Motor neuron (in vitro differentiated cells): ENCODE measurements at regions of chr16 and their contacts with region 1.

Region 1: DNA sequence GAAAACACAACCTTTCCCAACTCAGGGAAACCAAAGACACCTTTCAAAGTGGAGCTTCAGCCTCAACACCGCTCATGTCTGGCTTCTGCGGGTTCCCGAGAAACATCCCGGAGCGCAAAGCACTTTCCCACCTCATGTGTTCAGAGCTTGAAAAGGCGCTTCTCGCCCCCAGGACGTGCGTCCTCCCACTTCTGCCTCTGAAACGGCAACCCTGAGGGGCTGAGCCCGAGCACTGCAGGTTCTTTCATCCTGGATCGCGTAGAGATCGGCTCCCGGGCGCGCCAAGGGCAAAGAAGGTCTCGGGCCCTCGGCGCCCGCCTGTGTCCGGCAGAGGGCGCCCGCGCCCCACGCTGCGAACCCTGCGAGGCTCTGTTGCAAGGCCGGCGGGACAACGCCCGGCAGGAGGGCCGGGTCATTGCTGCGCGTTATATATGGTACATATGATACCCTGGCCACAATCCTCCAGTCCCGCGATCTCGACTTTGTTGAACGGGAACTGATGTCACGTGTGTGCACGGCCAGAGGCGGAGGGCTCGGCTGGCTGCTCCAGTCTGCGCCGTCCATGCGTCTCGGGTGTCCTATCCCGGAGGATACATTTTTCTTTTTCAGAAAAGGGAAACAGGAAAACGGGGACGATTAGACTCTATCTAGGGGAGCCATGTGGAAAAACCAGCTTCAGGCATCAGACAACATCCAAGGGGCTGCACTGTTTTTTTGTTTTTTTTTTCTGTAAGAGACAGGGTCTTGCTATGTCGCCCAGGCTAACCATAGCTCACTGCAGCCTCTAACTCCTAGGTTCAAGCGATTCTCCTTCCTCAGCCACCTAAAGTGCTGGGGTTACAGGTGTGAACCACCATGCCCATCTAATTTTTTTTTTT is 19.1 kb downstream of the COQ7 start:
- ATAC-seq: peak; percentile 98 to 100 (median 100)
- H3K4me3 ChIP-seq: peak overlapping the region; percentile 2 to 34 (median 18)
- H3K27ac ChIP-seq: no peak overlapping the region
- H3K4me1 ChIP-seq: no peaks in the 10 kb centered on the region

Region 2: GRCh38 chr16:19330841-19331397 is 244.4 kb after region 1 on chr16:
- in situ Hi-C with region 1: no loop called
- ATAC-seq: peak in 5 of 8 experiments; percentile 41 to 98 (median 94)
- H3K4me3 ChIP-seq: no peak overlapping the region
- H3K27ac ChIP-seq: no peak overlapping the region
- H3K4me1 ChIP-seq: no peaks in the 10 kb centered on the region

Region 3: DNA sequence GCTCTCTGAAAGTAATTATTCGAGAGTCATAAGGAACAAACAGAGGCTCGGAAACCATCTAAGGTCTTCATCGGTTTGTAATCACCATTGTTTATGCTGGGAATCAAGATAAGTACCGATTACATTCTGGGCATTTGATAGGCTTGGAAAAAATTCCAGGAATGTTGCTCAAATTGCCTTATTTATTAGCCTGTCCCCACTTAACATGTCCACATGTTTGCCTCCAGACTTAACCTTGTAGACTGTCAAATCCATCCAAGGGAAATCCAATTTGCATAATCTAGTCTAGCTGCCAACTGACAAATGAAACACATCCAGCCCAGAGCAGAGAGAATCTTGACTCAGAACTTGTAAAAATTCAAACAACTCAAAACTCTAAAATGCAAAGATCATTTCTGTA is 279.8 kb after region 1 on chr16:
- in situ Hi-C with region 1: loop called in 4 of 9 experiments (anchors 10 to 25 kb)
- ATAC-seq: peak in 3 of 8 experiments; percentile 43 to 69 (median 52)
- H3K4me3 ChIP-seq: no peak overlapping the region
- H3K27ac ChIP-seq: no peak overlapping the region
- H3K4me1 ChIP-seq: no peaks in the 10 kb centered on the region

Region 4: GRCh38 chr16:19375561-19376158 is 289.1 kb after region 1 on chr16:
- in situ Hi-C with region 1: loop called in 8 of 9 experiments (anchors 5 to 25 kb)
- ATAC-seq: peak; percentile 52 to 81 (median 66)
- H3K4me3 ChIP-seq: no peak overlapping the region
- H3K27ac ChIP-seq: no peak overlapping the region
- H3K4me1 ChIP-seq: no peaks in the 10 kb centered on the region

Region 5: GRCh38 chr16:19389246-19389645 is 302.7 kb after region 1 on chr16:
- in situ Hi-C with region 1: loop called in 3 of 9 experiments (anchors 10 to 25 kb)
- ATAC-seq: peak in 6 of 8 experiments; percentile 27 to 99 (median 76)
- H3K4me3 ChIP-seq: no peak overlapping the region
- H3K27ac ChIP-seq: no peak overlapping the region
- H3K4me1 ChIP-seq: peaks cover 0 to 8% of the 10 kb centered on the region in 2 donors

Region 6: DNA sequence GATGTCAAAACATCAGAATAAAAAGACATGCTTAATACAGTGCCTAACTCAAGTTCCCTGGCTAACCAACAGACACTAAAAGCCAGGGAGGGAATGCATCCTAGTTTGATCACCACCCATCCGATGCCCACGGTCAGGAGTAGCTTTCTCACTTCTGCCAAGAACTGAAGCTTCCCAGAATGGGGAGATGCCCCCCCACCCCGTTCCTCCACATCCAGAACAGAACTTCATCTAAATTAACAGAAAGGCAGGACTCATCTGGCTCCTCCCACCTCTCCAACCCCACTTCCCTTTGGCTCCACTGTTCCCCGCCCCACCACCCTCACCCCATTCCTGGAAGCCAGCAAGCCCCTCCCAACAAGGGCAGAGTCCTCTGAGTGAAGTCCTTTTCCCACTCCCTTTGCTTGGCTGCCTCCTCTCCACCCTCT is 401.7 kb after region 1 on chr16:
- in situ Hi-C with region 1: loop called in 1 of 9 experiments (anchors 25 kb)
- ATAC-seq: peak in 3 of 8 experiments; percentile 66 to 92 (median 90)
- H3K4me3 ChIP-seq: no peak overlapping the region
- H3K27ac ChIP-seq: no peak overlapping the region
- H3K4me1 ChIP-seq: peaks cover 0 to 2% of the 10 kb centered on the region in 2 donors

Region 7: GRCh38 chr16:19521471-19522396 is 435.2 kb after region 1 on chr16 and contains the start of gene GDE1:
- in situ Hi-C with region 1: loop called in 3 of 9 experiments (anchors 25 kb)
- ATAC-seq: peak; percentile 66 to 88 (median 84)
- H3K4me3 ChIP-seq: peak within 1 kb of the TSS; percentile 59 to 82 (median 76)
- H3K27ac ChIP-seq: peak within 1 kb of the TSS; percentile 79 to 82
- H3K4me1 ChIP-seq: peaks cover 10 to 38% of the 10 kb centered on the region in 2 donors
- total RNA-seq, gene GDE1: 30.2 to 130 (median 48.5) TPM